Aorta (tissue), 5 donors: ENCODE measurements at regions of chr10 and their contacts with region 1.

Region 1: DNA sequence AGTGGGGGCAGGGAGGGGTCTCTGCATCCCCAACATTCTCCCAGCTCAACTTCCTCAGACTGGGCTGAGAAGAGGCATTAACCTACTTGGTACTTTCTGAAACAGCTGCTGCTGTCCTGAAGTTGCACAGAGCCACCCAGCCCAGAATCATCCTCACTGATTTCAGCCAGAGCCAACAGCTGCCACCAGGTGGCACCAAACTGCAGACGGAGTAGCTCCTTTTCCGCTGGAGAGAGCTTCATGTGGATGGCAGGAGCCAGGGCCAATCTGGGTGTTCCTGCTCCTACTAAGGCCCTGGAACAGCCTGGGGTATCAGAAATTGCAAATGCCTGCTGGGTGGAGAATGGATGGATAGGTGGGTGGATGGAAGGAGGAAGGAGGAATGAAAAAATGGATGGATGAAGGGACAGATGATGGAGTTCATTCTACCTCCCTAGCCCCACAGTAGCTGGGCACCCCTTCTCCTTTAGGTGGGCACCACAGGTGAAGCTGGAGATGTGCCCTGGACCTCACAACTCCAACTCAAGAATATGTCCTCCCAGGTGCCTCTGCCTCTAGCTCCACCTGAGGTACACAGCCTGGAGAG is 11.8 kb upstream of the DRGX start:
- DNase-seq: peak; percentile 84 to 90
- ATAC-seq: peak; percentile 64
- H3K4me3 ChIP-seq: no peak overlapping the region
- H3K27ac ChIP-seq: no peak overlapping the region
- H3K4me1 ChIP-seq: no peaks in the 10 kb centered on the region
- H3K27me3 ChIP-seq: no peaks in the 10 kb centered on the region

Region 2: DNA sequence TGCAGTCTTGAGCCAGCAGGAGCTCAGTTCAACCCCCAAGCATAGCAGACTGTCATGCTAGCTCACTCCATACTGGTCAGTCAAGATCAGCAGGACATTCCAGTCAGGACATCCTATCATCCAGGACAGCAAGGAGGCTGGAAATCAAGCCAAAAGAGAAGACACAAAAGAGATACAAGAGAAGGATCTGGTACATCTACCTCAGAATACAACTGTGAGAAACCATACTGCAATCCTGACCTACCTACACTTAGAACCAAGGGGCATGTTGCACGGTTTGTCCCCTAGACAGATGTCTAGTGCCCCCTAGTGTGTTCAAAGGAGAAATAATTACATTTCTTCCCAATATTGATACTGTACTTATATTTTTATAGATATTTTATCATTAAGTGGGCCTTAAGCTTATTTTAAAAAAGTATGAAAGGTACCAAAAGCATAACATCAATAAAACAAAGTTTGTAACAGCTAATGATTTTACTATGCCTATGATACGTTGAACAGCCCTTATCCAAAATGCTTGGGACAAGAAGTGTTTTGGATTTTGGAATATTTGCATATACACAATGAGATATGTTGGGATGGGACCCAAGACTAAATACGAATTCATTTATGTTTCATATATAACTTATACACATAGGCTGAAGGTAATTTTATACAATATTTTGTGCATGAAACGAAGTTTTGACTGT is 104.6 kb after region 1 on chr10:
- intact Hi-C with region 1: loop called (anchors 2 to 10 kb)
- DNase-seq: no peak
- ATAC-seq: no peak
- H3K4me3 ChIP-seq: no peak overlapping the region
- H3K27ac ChIP-seq: no peak overlapping the region
- H3K4me1 ChIP-seq: no peaks in the 10 kb centered on the region
- H3K27me3 ChIP-seq: no peaks in the 10 kb centered on the region

Region 3: GRCh38 chr10:49518982-49519578 is 111.4 kb after region 1 on chr10:
- intact Hi-C with region 1: loop called in 1 of 2 experiments (anchors 10 kb)
- DNase-seq: no peak
- ATAC-seq: peak; percentile 74
- H3K4me3 ChIP-seq: no peak overlapping the region
- H3K27ac ChIP-seq: no peak overlapping the region
- H3K4me1 ChIP-seq: peaks cover 5 to 7% of the 10 kb centered on the region in 2 donors
- H3K27me3 ChIP-seq: no peaks in the 10 kb centered on the region

Region 4: DNA sequence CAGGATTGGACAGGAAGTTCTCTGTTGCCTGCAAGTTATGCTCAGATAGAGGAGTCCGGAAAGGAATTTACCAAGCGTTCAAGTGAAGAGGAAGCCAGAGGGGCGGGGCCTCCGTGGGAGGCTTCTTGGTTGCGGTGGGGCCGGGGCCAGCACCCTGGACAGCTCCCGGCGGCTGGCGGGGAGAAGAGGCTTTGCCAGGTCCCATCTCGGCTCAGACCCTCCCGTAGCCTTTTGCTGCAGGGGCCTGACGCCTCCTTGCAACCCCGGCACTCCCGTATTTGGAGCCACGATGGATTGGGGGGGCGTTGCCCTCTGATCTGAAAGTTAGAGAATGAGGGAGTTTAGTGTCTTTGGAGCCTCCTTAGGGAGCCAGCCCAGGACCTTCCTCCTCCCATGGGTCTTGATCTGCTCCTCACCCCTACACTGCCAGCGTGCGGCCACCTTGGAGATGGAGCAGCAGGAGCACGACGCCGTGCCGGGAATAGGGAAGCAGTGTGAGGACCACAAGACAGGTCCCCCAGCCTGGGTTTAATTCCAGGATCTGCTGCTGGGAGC is 199.4 kb after region 1 on chr10:
- intact Hi-C with region 1: loop called in 1 of 2 experiments (anchors 10 kb)
- DNase-seq: peak; percentile 82 to 88
- ATAC-seq: peak; percentile 80
- H3K4me3 ChIP-seq: no peak overlapping the region
- H3K27ac ChIP-seq: no peak overlapping the region
- H3K4me1 ChIP-seq: no peaks in the 10 kb centered on the region
- H3K27me3 ChIP-seq: peaks cover 0 to 6% of the 10 kb centered on the region in 2 donors